Activated CD8-positive, alpha-beta T cell treated with anti-CD3 and anti-CD28 coated beads, Interleukin-2, amount 10 ng/mL, durations not matched to agents 7 days and 5 days (primary cell): ENCODE measurements at regions of chr17 and their contacts with region 1.

Region 1: GRCh38 chr17:51153210-51154072 is at the start of gene NME1:
- DNase-seq: peak; percentile 98
- ATAC-seq: peak; percentile 95
- H3K4me3 Mint-ChIP-seq: no peak within 1 kb of the TSS
- H3K27ac Mint-ChIP-seq: no peak within 1 kb of the TSS
- H3K4me1 Mint-ChIP-seq: peaks cover 12% of the 10 kb centered on the region
- H3K27me3 Mint-ChIP-seq: no peaks in the 10 kb centered on the region
- total RNA-seq, gene NME1: 148 to 150 TPM

Region 2: DNA sequence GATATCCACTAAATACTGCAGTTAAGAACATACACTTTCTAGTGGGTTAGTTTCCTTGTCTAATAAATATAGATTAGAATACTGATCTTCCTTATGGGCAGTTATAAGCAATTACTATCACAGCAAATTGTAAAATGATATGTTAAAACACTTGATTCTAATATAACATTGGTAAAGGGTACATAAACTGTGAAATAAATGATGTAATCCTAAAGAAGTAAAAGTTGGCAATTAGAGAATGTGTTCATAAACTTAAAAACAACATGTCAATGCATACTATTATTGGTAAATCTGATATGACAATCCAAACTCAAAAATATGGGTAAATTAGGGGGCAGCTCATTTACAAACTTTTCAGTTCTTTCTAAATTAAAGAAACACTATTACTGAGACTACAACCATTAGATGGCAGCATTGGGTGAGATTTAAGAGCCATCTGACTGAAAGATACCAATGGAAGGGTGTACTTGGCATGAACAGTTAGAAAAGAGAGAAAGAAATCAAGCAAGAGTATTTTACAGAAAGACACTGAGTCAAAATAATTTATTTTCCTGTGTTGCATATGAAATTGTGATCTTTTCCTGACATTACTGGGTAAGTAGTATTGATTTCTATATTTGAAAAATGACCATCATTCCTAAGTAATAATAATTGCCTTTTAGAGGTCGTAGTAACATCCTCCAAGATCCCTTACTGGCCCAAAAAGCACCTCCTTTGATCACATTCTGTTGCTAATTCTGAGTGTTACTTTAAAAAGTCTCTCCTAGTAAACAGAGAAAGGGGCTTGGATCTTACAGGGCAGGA is 152.4 kb before region 1 on chr17:
- CTCF ChIA-PET with region 1: interaction called, 131 read pairs
- POLR2A ChIA-PET with region 1: no interaction called
- DNase-seq: peak; percentile 47
- ATAC-seq: peak; percentile 71
- H3K4me3 Mint-ChIP-seq: no peak overlapping the region
- H3K27ac Mint-ChIP-seq: no peak overlapping the region
- H3K4me1 Mint-ChIP-seq: no peaks in the 10 kb centered on the region
- H3K27me3 Mint-ChIP-seq: no peaks in the 10 kb centered on the region

Region 3: GRCh38 chr17:51029568-51030463 is 123.6 kb before region 1 on chr17:
- CTCF ChIA-PET with region 1: interaction called, 15 read pairs
- POLR2A ChIA-PET with region 1: no interaction called
- DNase-seq: no peak
- ATAC-seq: peak; percentile 77
- H3K4me3 Mint-ChIP-seq: peak overlapping the region; percentile 77
- H3K27ac Mint-ChIP-seq: peak overlapping the region; percentile 90
- H3K4me1 Mint-ChIP-seq: peaks cover 27% of the 10 kb centered on the region
- H3K27me3 Mint-ChIP-seq: no peaks in the 10 kb centered on the region

Region 4: GRCh38 chr17:51056813-51057510 is 96.5 kb before region 1 on chr17:
- CTCF ChIA-PET with region 1: interaction called, 17 read pairs
- POLR2A ChIA-PET with region 1: no interaction called
- DNase-seq: peak; percentile 54
- ATAC-seq: peak; percentile 57
- H3K4me3 Mint-ChIP-seq: no peak overlapping the region
- H3K27ac Mint-ChIP-seq: no peak overlapping the region
- H3K4me1 Mint-ChIP-seq: peaks cover 6% of the 10 kb centered on the region
- H3K27me3 Mint-ChIP-seq: no peaks in the 10 kb centered on the region

Region 5: DNA sequence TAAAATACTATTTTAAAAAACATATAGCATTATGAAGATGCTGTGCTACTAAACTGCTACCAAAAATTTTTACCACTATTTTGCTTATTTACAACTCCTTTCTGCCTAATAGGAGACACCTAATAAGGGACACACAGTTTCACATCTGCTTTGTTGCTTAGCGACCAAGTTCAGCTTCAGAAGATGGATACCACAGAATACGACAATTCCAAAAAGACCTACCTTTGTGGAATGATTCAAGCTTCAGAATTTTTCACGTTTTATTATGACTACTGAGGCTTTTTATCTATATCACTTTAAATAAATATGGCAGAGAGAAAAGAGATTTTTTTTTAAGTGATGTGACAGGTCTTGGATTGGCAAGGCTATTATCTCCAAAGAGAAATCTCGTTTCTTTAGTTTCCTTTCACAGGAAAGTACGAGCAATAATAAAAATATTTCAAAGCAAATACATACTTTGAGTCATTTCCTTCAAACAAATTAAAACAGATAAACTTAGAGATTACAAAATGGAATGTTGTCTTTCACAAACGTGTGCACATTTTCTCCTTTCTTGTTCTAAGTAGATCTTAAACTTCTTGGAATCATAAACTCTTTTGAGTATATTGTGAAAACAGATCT is 68.1 kb before region 1 on chr17:
- CTCF ChIA-PET with region 1: no interaction called
- POLR2A ChIA-PET with region 1: no interaction called
- DNase-seq: no peak
- ATAC-seq: no peak
- H3K4me3 Mint-ChIP-seq: no peak overlapping the region
- H3K27ac Mint-ChIP-seq: no peak overlapping the region
- H3K4me1 Mint-ChIP-seq: peaks cover 1% of the 10 kb centered on the region
- H3K27me3 Mint-ChIP-seq: no peaks in the 10 kb centered on the region

Region 6: GRCh38 chr17:51135956-51136355 is 17.5 kb before region 1 on chr17:
- CTCF ChIA-PET with region 1: interaction called, 11 read pairs
- POLR2A ChIA-PET with region 1: interaction called, 4 read pairs
- DNase-seq: no peak
- ATAC-seq: no peak
- H3K4me3 Mint-ChIP-seq: no peak overlapping the region
- H3K27ac Mint-ChIP-seq: no peak overlapping the region
- H3K4me1 Mint-ChIP-seq: peaks cover 11% of the 10 kb centered on the region
- H3K27me3 Mint-ChIP-seq: no peaks in the 10 kb centered on the region

Region 7: DNA sequence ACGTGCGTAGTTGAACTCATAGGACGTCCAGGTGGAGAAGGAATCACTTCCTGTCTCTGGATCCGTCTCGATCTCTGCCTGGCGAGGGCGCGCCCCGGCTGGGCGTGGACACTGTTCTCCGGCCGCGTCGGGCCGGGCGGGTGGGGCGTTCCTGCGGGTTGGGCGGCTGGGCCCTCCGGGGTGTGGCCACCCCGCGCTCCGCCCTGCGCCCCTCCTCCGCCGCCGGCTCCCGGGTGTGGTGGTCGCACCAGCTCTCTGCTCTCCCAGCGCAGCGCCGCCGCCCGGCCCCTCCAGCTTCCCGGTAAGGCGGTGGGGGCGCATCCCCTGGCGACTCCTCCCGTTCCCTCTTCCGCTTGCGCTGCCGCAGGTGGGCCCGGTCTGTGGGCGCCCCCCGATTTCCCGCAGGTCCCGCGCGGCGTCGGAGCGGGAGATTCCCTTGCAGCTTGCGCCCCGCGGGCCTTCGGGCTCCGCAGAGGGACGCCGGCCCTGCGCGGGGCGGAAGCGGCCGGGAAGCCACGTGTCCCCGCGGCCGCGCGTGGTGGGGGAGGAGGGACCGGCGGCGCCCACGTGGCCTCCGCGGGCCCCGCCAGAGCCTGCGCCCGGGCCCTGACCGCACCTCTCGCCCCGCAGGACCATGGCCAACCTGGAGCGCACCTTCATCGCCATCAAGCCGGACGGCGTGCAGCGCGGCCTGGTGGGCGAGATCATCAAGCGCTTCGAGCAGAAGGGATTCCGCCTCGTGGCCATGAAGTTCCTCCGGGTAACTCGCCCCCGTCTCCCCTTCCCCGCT is 13.0 kb after region 1 on chr17 and contains the start of gene NME2:
- CTCF ChIA-PET with region 1: interaction called, 24 read pairs
- POLR2A ChIA-PET with region 1: interaction called, 18 read pairs
- DNase-seq: peak; percentile 77
- ATAC-seq: peak; percentile 84
- H3K4me3 Mint-ChIP-seq: peak within 1 kb of the TSS; percentile 88
- H3K27ac Mint-ChIP-seq: peak within 1 kb of the TSS; percentile 97
- H3K4me1 Mint-ChIP-seq: peaks cover 37% of the 10 kb centered on the region
- H3K27me3 Mint-ChIP-seq: no peaks in the 10 kb centered on the region
- total RNA-seq, gene NME2: 502 to 542 TPM

Region 8: GRCh38 chr17:51298508-51299371 is 145.3 kb after region 1 on chr17:
- CTCF ChIA-PET with region 1: no interaction called
- POLR2A ChIA-PET with region 1: no interaction called
- DNase-seq: no peak
- ATAC-seq: no peak
- H3K4me3 Mint-ChIP-seq: no peak overlapping the region
- H3K27ac Mint-ChIP-seq: no peak overlapping the region
- H3K4me1 Mint-ChIP-seq: peaks cover 8% of the 10 kb centered on the region
- H3K27me3 Mint-ChIP-seq: no peaks in the 10 kb centered on the region